ENCODE measurements at regions of chr11 and their contacts with region 1.

Region 1: DNA sequence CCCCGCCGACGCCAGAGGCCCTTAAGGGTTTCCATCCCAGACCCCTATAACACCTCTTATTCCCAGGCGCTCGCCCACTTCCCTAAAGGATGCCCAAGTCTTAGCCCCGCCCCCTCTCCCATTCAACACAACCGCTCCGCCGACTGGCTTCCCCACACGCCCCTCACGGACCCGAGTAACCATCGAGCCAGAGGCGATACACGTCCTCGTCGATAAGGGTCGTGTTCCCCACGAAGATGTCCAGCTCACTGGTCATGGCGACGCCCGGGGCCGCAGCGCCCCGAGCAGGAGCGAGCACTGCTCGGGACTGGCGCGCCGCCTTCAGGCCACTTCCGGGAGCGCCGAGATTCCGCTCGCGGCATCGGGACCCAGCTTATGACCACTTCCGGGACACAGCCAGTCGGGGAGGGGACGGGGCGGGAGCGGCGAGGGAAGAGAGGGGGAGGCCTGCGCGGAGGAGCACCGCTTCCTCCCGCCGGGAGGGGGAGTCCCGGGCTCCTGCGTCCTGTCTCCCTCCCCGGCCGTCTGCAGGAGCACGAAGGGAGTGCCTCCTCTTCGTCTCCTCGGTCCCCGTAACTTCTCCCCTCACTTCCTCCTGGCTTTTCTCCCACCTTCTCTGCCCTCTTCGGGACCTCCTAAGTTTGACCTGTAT is at the start of gene FIBP:
- DNase-seq: peak; percentile 97
- H3K4me3 ChIP-seq: peak within 1 kb of the TSS; percentile 93
- H3K27ac ChIP-seq: peak within 1 kb of the TSS; percentile 80
- H3K4me1 ChIP-seq: peaks cover 64% of the 10 kb centered on the region
- CTCF ChIP-seq: peak; percentile 81
- total RNA-seq, gene FIBP: 133 and 184 TPM in 2 replicates

Region 2: DNA sequence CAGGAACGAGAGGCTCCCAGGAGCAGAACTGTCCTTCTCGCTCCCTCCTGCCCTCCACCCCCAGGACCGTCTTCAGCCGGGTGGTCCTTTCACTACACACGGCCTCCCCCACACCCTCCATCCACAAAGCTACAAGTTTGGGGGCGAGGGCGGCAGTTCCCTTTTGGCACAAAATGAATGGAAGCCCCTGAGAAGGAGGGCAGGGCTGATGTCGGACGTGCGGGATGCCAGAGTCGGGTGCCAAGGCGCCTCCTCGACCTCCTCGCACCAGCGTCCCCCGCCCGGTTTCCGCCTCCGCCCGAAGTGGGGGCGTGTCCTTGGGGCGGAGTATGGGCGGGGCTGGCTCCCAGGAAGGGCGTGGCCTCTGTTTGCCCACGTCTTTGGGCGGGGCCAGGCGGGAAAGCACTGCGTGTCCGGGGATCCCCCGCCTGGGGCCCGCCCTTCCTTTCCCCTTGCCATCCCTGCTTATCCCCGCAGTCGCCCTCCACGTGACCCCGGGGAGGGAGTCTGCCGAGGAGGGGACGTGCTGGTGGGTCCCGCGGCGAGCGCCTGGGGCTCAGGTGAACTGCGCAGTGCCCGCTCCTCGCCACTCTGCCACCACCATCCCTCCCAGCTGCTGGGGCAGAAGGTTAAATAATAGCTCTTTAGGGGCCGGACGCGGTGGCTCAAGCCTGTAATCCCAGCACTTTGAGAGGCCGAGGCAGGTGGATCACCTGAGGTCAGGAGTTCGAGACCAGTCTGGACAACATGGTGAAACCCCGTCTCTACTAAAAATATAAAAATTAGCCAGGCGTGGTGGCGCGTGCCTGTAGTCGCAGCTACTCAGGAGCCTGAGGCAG is 14.8 kb before region 1 on chr11:
- CTCF ChIA-PET with region 1: interaction called, 10 read pairs
- POLR2A ChIA-PET with region 1: interaction called, 12 read pairs
- intact Hi-C with region 1: loop called (anchors 1 kb)
- DNase-seq: peak; percentile 94
- H3K4me3 ChIP-seq: peak overlapping the region; percentile 61
- H3K27ac ChIP-seq: peak overlapping the region; percentile 46
- H3K4me1 ChIP-seq: peaks cover 28% of the 10 kb centered on the region
- CTCF ChIP-seq: no peak

Region 3: GRCh38 chr11:65961232-65961901 is 73.1 kb after region 1 on chr11 and contains the start of gene SART1:
- CTCF ChIA-PET with region 1: interaction called, 3 read pairs
- POLR2A ChIA-PET with region 1: no interaction called
- intact Hi-C with region 1: loop called (anchors 1 kb)
- DNase-seq: peak; percentile 99
- H3K4me3 ChIP-seq: peak within 1 kb of the TSS; percentile 89
- H3K27ac ChIP-seq: peak within 1 kb of the TSS; percentile 69
- H3K4me1 ChIP-seq: peaks cover 26% of the 10 kb centered on the region
- CTCF ChIP-seq: no peak
- total RNA-seq, gene SART1: 50.4 and 93.8 TPM in 2 replicates

Region 4: DNA sequence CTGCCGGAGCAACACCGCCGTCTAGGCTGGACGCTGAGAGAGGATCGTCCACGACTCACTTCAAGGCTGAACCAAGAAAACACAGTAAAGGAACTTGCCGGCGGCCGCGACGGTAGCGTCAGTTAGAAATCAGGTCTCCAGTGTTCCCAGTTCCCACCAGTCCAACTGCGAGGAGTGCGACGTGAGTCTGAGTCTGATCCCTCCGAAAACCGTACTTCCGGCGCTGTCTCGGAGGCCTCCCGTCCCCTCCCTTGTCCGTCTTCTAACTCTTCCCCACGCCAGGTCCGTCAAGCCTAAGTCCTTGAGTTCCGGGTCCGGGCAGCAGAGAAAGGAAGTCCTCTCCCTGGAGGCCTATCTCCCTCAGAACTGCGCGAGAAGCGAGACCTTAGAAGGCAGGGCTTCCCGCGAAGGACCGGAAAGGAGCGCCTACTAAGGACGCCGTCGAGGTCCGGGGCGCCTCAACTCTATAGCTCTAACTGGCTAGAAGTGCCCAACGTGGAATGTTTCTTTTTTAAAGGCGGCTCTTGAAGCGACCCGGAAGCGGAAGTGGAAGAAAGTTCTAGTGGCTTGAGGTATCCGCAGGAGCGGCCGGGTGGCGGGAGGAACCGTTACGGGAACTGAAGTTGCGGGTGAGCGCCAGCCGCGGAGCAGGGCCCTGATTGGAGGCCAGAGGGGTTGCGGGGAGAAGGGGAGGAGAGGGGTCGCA is 113.8 kb after region 1 on chr11 and contains the starts of genes BANF1 and EIF1AD:
- CTCF ChIA-PET with region 1: interaction called, 3 read pairs
- POLR2A ChIA-PET with region 1: interaction called, 4 read pairs
- intact Hi-C with region 1: loop called (anchors 5 kb)
- DNase-seq: peak; percentile 98
- H3K4me3 ChIP-seq: peak within 1 kb of the TSS; percentile 89
- H3K27ac ChIP-seq: peak within 1 kb of the TSS; percentile 93
- H3K4me1 ChIP-seq: peaks cover 33% of the 10 kb centered on the region
- CTCF ChIP-seq: no peak
- total RNA-seq, gene BANF1: 70.6 and 82.2 TPM in 2 replicates
- total RNA-seq, gene EIF1AD: 51.1 and 65.9 TPM in 2 replicates

Region 5: GRCh38 chr11:66081505-66081904 is 193.2 kb after region 1 on chr11:
- CTCF ChIA-PET with region 1: interaction called, 13 read pairs
- POLR2A ChIA-PET with region 1: no interaction called
- intact Hi-C with region 1: no loop called
- DNase-seq: peak; percentile 92
- H3K4me3 ChIP-seq: peak overlapping the region; percentile 52
- H3K27ac ChIP-seq: peak overlapping the region; percentile 82
- H3K4me1 ChIP-seq: peaks cover 86% of the 10 kb centered on the region
- CTCF ChIP-seq: no peak

Measured in OCI-LY7 (cell line).